Esophagus muscularis mucosa (tissue), 4 donors: ENCODE measurements at regions of chr18 and their contacts with region 1.

Region 1: GRCh38 chr18:11980555-11981382 is 538 bp upstream of the IMPA2 start:
- DNase-seq: peak; percentile 99
- H3K4me3 ChIP-seq: peak overlapping the region; percentile 69 to 100 (median 89)
- H3K27ac ChIP-seq: peak overlapping the region; percentile 92 to 100 (median 97)
- H3K4me1 ChIP-seq: peaks cover 18 to 49% (median 49%) of the 10 kb centered on the region in 4 donors
- H3K27me3 ChIP-seq: no peaks in the 10 kb centered on the region
- CTCF ChIP-seq: peak; percentile 5 to 32 (median 22)
- EP300 ChIP-seq: no peak
- POLR2A ChIP-seq: peak; percentile 85

Region 2: DNA sequence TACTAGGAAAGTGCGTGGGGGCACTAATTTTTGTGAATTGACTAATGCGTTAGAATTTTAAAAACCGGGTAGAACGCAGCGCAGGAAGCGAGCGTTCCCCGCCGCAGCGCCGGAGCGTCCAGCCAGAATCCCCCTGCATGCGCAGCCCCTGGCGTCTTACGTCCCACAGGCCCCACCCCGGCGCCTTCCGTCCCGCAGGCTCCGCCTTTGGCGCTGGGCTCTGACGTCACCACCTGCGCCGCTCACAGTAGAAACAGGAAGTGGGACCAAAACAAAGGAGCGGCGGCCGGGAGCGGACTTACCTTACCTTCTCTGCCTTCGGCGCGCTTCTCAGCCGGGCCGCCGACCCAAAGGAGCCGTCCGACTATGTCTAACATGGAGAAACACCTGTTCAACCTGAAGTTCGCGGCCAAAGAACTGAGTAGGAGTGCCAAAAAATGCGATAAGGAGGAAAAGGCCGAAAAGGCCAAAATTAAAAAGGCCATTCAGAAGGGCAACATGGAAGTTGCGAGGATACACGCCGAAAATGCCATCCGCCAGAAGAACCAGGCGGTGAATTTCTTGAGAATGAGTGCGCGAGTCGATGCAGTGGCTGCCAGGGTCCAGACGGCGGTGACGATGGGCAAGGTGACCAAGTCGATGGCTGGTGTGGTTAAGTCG is 129.5 kb before region 1 on chr18 and contains the start of gene CHMP1B:
- intact Hi-C with region 1: loop called (anchors 10 kb)
- DNase-seq: peak; percentile 99
- H3K4me3 ChIP-seq: peak within 1 kb of the TSS; percentile 66 to 94 (median 82)
- H3K27ac ChIP-seq: peak within 1 kb of the TSS; percentile 86 to 96 (median 94)
- H3K4me1 ChIP-seq: peaks cover 31 to 47% (median 42%) of the 10 kb centered on the region in 4 donors
- H3K27me3 ChIP-seq: no peaks in the 10 kb centered on the region
- CTCF ChIP-seq: peak in 1 of 3 experiments; percentile 22
- EP300 ChIP-seq: peak; percentile 13
- POLR2A ChIP-seq: peak; percentile 96
- total RNA-seq, gene CHMP1B: 42.0 to 58.6 (median 49.7) TPM

Region 3: DNA sequence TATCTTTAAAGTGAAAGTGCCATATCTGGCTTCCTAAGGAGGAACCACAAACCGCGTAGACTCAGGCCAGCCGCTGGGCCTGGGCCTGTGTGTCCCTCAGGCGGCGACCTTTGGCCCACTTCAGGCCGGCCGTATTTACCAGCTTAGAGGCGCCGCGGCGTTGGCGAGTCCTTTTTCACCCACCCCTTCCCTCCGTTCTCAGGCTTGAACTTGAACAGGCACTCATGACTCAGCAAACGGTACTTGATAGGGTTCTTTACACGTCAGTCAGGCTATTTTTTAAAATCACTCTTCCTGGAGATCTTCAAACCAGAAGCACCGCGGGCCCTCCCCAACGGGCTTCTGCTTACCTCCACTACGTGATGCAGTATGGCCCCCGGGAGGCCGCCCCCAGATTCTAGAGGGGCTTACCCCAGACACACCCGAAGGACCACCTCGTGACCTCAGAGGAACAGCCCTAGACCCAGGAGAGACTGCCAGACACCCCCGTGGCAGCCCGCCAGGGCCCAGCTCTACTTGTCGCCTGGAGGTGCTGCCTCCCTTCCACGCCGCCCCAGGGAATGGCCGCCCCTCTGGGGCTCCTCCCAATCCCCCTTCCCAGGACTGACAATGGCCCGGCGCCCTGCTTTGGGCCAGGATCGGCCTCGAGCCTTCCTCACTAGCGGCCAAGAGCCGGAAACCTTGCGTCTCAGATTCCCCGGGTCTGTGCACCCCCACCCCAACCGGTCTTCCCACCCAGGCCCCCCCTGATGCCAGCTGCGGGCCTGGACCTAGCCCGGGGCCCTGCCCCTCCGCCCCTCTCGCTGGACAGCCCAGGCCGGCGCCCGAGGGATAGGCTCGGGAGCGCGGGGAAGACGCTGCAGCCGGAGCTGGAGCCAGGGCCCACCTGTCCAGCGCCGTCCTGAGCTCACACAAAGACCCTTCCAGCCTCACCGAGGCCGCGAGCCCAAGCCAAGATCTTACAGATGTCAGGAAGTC is 33.3 kb before region 1 on chr18:
- intact Hi-C with region 1: loop called (anchors 1 kb)
- DNase-seq: peak; percentile 98
- H3K4me3 ChIP-seq: peak overlapping the region; percentile 57 to 67 (median 62)
- H3K27ac ChIP-seq: peak overlapping the region; percentile 89 to 95 (median 95)
- H3K4me1 ChIP-seq: peaks cover 17 to 64% (median 52%) of the 10 kb centered on the region in 4 donors
- H3K27me3 ChIP-seq: no peaks in the 10 kb centered on the region
- CTCF ChIP-seq: no peak
- EP300 ChIP-seq: peak; percentile 53
- POLR2A ChIP-seq: peak; percentile 61

Region 4: DNA sequence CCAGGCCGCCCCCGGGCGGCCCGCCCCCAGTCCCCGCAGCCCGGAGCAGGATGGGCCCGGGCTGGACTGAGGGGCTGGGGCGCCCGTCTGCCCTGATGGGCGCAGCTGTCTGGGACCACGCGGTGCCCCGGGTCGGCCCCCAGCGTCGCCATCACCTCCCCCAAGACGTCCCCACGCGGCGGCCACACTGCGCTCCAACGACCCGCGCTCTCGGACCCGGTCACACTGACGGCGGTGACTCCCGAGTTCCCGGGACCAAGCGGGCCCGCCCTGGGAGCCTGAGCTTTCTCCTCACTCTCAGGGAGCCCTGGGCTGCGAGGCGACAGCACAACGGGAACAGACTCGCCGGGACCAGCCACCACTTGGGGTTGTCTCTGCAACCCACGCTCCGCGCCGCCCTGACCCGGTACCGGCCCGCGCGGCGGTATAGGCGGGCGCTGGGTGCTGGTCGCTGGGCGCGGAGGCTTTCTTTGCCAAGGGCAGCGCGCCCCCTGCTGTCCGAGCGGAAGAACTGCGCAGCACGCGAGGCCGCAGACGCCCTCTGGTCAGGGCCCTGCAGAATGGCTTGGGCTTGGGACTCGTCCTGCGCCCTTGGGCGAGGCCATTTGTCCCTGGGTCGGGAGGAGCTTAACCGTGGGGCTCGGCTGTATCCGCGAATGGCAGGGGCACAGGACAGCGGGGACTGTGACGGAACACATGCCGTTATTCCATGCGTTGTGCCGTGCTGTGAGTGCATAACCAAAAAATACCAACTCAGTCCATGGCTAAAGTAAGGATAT is 58.1 kb after region 1 on chr18:
- intact Hi-C with region 1: loop called (anchors 5 kb)
- DNase-seq: peak; percentile 94
- H3K4me3 ChIP-seq: peak overlapping the region; percentile 59 to 66 (median 62)
- H3K27ac ChIP-seq: peak overlapping the region in 3 of 4 donors; percentile 37 to 60 (median 48)
- H3K4me1 ChIP-seq: peaks cover 10 to 21% (median 16%) of the 10 kb centered on the region in 4 donors
- H3K27me3 ChIP-seq: no peaks in the 10 kb centered on the region
- CTCF ChIP-seq: peak in 2 of 3 experiments; percentile 97 to 98
- EP300 ChIP-seq: no peak
- POLR2A ChIP-seq: no peak